CD8-positive, alpha-beta T cell (primary cell): ENCODE measurements at regions of chr11 and their contacts with region 1.

Region 1: GRCh38 chr11:4960877-4961276 is 5.4 kb upstream of the OR51A2 start:
- DNase-seq: no peak
- ATAC-seq: no peak
- H3K4me3 ChIP-seq: no peak overlapping the region
- H3K4me3 Mint-ChIP-seq: no peak overlapping the region
- H3K27ac ChIP-seq: no peak overlapping the region
- H3K27ac Mint-ChIP-seq: no peak overlapping the region
- H3K4me1 ChIP-seq: no peaks in the 10 kb centered on the region
- H3K4me1 Mint-ChIP-seq: no peaks in the 10 kb centered on the region
- H3K27me3 ChIP-seq: no peaks in the 10 kb centered on the region
- H3K27me3 Mint-ChIP-seq: peaks cover 2% of the 10 kb centered on the region
- CTCF ChIP-seq: no peak

Region 2: GRCh38 chr11:4947505-4947904 is 13.4 kb before region 1 on chr11 and contains the start of gene OR51A4:
- CTCF ChIA-PET with region 1: no interaction called
- POLR2A ChIA-PET with region 1: no interaction called
- intact Hi-C with region 1: loop called in 1 of 2 experiments (anchors 1 kb)
- DNase-seq: no peak
- ATAC-seq: no peak
- H3K4me3 ChIP-seq: no peak within 1 kb of the TSS
- H3K4me3 Mint-ChIP-seq: no peak within 1 kb of the TSS
- H3K27ac ChIP-seq: no peak within 1 kb of the TSS
- H3K27ac Mint-ChIP-seq: no peak within 1 kb of the TSS
- H3K4me1 ChIP-seq: no peaks in the 10 kb centered on the region
- H3K4me1 Mint-ChIP-seq: no peaks in the 10 kb centered on the region
- H3K27me3 ChIP-seq: no peaks in the 10 kb centered on the region
- H3K27me3 Mint-ChIP-seq: no peaks in the 10 kb centered on the region
- CTCF ChIP-seq: no peak
- total RNA-seq, gene OR51A4: not detected